ENCODE measurements at regions of chr3 and their contacts with region 1.

Region 1: DNA sequence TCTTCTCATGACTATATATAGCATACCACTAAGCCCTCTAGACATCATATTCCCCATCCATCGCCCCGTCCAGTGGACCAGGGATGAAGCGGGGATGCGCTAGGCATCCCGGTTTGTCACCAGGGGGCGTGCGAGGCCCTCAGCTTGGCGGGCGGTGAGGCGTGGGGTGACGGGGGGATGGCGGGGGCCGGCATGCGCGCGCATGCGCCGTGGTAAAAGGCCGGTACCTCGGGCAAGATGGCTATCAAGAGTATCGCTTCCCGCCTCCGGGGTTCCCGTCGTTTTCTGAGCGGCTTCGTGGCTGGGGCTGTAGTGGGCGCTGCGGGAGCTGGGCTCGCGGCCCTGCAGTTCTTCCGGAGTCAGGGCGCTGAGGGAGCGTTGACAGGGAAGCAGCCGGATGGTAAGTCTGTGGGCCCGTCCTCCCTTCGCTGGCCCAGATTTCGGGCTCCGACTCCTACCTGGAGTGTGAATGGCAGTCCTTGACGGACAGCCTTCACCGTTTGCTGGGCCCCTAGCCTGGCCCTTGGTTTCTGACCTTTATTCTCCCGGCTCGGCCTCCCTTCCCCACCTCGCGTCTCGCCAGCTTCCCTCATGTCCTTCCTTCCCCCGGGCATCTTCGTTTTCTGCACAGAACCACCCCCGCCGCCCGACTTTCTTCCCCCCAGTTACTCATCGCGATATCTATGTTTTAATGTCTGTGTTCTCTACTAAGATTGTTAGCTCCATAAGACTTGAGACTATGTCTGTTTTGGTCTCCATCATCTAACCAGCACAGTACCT is at the start of gene EXOG:
- DNase-seq: peak; percentile 58
- H3K4me3 ChIP-seq: peak within 1 kb of the TSS; percentile 55
- H3K27me3 ChIP-seq: no peaks in the 10 kb centered on the region
- CTCF ChIP-seq: peak; percentile 98
- polyA plus RNA-seq, gene EXOG: 7.5 and 11.8 TPM in 2 replicates

Region 2: DNA sequence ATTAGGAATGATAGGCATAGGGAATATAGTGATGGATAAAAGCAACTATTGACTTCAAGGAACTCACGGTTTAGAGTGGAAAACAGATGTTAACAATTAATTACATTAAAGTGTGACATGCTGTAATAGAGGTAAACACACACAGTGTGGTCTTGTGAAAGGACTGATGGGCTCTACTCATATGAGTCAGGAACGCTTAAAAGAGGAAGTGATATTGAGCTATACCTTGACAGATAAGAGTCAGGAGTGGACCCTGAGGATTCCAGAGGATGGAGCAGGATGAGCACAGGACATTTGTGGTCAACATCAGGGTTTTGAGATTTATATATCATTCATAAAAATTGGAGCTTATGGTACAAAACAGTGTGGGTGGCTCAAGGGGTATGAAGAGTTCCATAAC is 10.8 kb after region 1 on chr3:
- CTCF ChIA-PET with region 1: interaction called, 12 read pairs
- POLR2A ChIA-PET with region 1: no interaction called
- DNase-seq: no peak
- H3K4me3 ChIP-seq: no peak overlapping the region
- H3K27me3 ChIP-seq: no peaks in the 10 kb centered on the region
- CTCF ChIP-seq: no peak

Region 3: GRCh38 chr3:38843898-38844297 is 347.6 kb after region 1 on chr3:
- CTCF ChIA-PET with region 1: interaction called, 15 read pairs
- POLR2A ChIA-PET with region 1: no interaction called
- DNase-seq: no peak
- H3K4me3 ChIP-seq: no peak overlapping the region
- H3K27me3 ChIP-seq: peaks cover 6% of the 10 kb centered on the region
- CTCF ChIP-seq: peak; percentile 58

Region 4: DNA sequence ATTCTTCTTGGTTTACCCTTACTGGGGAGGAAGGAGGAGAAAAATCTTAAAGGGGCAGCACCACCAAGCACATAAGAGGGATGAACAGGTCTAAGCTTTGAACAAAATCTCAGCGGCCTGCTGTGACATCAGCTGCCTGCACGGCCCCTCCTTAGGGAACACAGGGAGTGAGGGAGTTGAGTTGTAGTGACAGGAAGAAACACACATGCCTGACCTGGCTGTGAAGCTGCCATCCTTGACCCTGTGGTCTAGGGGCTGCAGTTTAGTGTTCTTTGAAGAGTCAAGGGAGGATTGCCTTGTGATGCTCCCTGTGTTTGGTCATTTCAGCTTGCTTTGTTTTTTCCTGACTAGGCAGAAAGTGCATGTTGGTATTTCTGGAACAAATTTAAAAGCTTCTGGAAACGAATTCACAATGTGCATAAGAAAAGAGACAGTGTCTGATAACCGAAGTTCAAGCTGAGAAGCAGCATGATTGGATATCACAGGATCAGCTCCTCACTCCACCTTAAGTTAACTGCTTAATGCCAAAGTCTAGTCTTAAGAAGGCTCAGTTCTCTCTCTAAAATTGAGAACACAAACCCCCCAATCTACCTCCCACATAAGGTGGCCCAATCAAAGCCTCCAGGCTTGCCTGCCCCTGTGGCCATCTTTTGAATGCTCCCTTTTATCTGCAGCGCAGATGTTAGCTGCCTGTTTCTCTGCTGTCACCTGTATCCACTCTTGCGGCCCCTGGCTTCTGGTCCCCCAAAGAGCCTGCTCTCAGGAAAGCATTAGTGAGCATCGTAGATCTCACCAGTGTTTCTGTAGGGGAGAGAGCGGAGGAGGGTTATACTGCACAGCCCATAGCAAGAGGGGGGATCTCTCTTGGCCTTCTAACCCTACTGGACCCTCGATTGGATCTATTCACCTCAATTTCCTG is 473.3 kb after region 1 on chr3:
- CTCF ChIA-PET with region 1: no interaction called
- POLR2A ChIA-PET with region 1: interaction called, 22 read pairs
- DNase-seq: no peak
- H3K4me3 ChIP-seq: no peak overlapping the region
- H3K27me3 ChIP-seq: peaks cover 2% of the 10 kb centered on the region
- CTCF ChIP-seq: no peak